IMR-90 (cell line): ENCODE measurements at regions of chr3 and their contacts with region 1.

Region 1: GRCh38 chr3:155995525-155996351 is 124.6 kb upstream of the KCNAB1 start:
- DNase-seq: peak; percentile 72
- ATAC-seq: peak; percentile 95
- H3K4me3 ChIP-seq: no peak overlapping the region
- H3K27ac ChIP-seq: no peak overlapping the region
- H3K4me1 ChIP-seq: 0 out of 2 replicates have a peak, but pooled peaks cover 2% of the 10 kb centered on the region
- H3K27me3 ChIP-seq: no peaks in the 10 kb centered on the region
- CTCF ChIP-seq: peak; percentile 68
- POLR2A ChIP-seq: no peak
- RAD21 ChIP-seq: peak; percentile 64

Region 2: GRCh38 chr3:157130467-157131251 is 1134.9 kb after region 1 on chr3:
- CTCF ChIA-PET with region 1: no interaction called
- POLR2A ChIA-PET with region 1: no interaction called
- dilution Hi-C with region 1: no loop called
- in situ Hi-C with region 1: loop called (anchors 25 kb)
- intact Hi-C with region 1: loop called (anchors 5 kb)
- DNase-seq: peak; percentile 64
- ATAC-seq: no peak
- H3K4me3 ChIP-seq: no peak overlapping the region
- H3K27ac ChIP-seq: 0 out of 2 replicates have a peak overlapping the region, but pooled peaks have one; percentile 10
- H3K4me1 ChIP-seq: peaks cover 35% of the 10 kb centered on the region
- H3K27me3 ChIP-seq: no peaks in the 10 kb centered on the region
- CTCF ChIP-seq: peak; percentile 74
- POLR2A ChIP-seq: no peak
- RAD21 ChIP-seq: peak; percentile 76

Region 3: GRCh38 chr3:157239082-157239704 is 1243.5 kb after region 1 on chr3:
- CTCF ChIA-PET with region 1: no interaction called
- POLR2A ChIA-PET with region 1: no interaction called
- dilution Hi-C with region 1: no loop called
- in situ Hi-C with region 1: no loop called
- intact Hi-C with region 1: loop called (anchors 5 kb)
- DNase-seq: peak; percentile 55
- ATAC-seq: peak; percentile 84
- H3K4me3 ChIP-seq: no peak overlapping the region
- H3K27ac ChIP-seq: no peak overlapping the region
- H3K4me1 ChIP-seq: peaks cover 2% of the 10 kb centered on the region; the same call in 1 of the 2 replicates
- H3K27me3 ChIP-seq: no peaks in the 10 kb centered on the region
- CTCF ChIP-seq: peak; percentile 60
- POLR2A ChIP-seq: no peak
- RAD21 ChIP-seq: peak; percentile 60